IMR-90 (cell line): ENCODE measurements at regions of chr4 and their contacts with region 1.

Region 1: GRCh38 chr4:107989537-107990386 is at the start of gene HADH:
- DNase-seq: peak; percentile 88
- ATAC-seq: peak; percentile 100
- H3K4me3 ChIP-seq: peak within 1 kb of the TSS; percentile 84
- H3K27ac ChIP-seq: peak within 1 kb of the TSS; percentile 84
- H3K4me1 ChIP-seq: no peaks in the 10 kb centered on the region
- H3K27me3 ChIP-seq: no peaks in the 10 kb centered on the region; the same call in 1 of the 2 replicates
- CTCF ChIP-seq: no peak
- POLR2A ChIP-seq: peak; percentile 32; the same call in 1 of the 2 replicates
- RAD21 ChIP-seq: no peak
- total RNA-seq, gene HADH: 6.7 and 6.8 TPM in 2 replicates

Region 2: DNA sequence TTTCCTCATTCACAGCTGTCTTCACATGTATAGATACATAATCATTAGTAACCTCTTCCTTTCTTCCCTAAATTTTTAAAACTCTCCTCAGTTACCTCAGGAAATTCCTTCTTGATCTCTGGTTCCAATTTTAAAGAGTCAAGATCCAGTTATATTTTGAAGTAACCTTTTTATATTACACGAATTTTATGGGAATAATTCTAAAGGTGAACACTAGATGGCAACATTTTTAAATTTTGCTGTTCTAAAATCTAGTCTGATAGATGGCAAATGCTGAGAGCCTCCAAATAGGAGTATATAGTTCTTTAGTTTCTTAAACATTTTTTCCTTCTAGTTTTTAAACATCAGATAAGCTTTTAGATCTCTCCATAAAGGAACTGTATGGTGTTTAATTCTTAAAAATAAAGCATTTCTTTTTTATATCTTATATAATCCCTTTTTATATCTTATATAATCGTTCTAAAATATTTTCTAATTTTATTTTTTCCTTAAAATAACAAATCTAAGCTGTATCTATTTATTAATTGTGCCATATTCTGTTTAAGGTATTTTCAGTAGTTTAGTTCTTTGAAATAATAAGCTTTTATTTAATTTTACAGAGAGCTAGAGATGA is 231.8 kb before region 1 on chr4:
- CTCF ChIA-PET with region 1: no interaction called
- POLR2A ChIA-PET with region 1: no interaction called
- dilution Hi-C with region 1: no loop called
- in situ Hi-C with region 1: no loop called
- intact Hi-C with region 1: loop called (anchors 10 kb)
- DNase-seq: peak; percentile 44
- ATAC-seq: peak; percentile 57; the same call in 1 of the 2 replicates
- H3K4me3 ChIP-seq: no peak overlapping the region
- H3K27ac ChIP-seq: no peak overlapping the region
- H3K4me1 ChIP-seq: no peaks in the 10 kb centered on the region
- H3K27me3 ChIP-seq: peaks cover 12% of the 10 kb centered on the region
- CTCF ChIP-seq: peak; percentile 52
- POLR2A ChIP-seq: no peak
- RAD21 ChIP-seq: peak; percentile 50

Region 3: DNA sequence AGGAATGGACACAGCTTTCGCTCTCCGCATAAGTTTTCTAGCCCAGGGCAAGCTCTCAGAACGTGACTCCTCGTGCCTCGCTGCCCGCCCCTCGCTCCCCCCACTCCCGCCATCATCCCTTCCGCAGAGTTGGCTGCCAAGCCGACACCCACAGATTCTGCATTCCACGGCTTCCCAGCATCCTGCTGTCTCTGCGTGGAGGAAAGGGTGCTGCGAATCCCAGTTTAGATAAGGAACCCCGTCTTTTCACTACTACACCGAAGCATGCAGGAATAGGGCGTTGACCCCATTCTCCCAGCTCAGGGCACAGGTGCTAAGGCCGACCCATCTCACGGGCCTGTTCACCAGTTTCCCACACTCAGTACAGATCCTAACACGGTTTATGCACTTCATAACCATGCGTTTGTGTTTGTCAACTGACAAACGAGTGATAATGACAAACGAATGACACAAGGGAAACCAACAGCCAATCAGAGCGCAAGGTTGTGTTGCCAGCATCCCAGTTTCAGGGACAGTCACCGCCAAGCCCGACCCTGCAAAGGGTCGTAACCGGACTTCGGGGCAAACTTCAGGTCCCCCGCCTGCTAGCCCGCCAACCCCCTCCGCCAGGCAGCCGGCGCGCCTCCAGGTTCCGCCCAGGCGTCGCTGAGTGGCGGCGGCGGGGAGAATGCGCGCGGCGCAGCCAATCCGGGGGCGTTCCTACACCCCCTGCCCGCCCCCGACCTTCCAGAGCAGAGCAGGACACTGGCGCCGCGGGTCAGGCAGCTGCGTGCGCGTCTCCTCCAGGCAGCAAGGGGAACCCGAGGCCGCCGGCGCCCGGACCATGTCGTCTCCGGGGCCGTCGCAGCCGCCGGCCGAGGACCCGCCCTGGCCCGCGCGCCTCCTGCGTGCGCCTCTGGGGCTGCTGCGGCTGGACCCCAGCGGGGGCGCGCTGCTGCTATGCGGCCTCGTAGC is 58.7 kb before region 1 on chr4 and contains the start of gene CYP2U1:
- CTCF ChIA-PET with region 1: no interaction called
- POLR2A ChIA-PET with region 1: no interaction called
- dilution Hi-C with region 1: no loop called
- in situ Hi-C with region 1: no loop called
- intact Hi-C with region 1: loop called (anchors 5 kb)
- DNase-seq: peak; percentile 67
- ATAC-seq: peak; percentile 98
- H3K4me3 ChIP-seq: peak within 1 kb of the TSS; percentile 59
- H3K27ac ChIP-seq: peak within 1 kb of the TSS; percentile 17; the same call in 1 of the 2 replicates
- H3K4me1 ChIP-seq: peaks cover 4% of the 10 kb centered on the region
- H3K27me3 ChIP-seq: no peaks in the 10 kb centered on the region
- CTCF ChIP-seq: 0 out of 2 replicates have a peak, but pooled peaks have one; percentile 8
- POLR2A ChIP-seq: no peak
- RAD21 ChIP-seq: no peak
- total RNA-seq, gene CYP2U1: 11.1 and 13.6 TPM in 2 replicates